ENCODE measurements at regions of chr2 and their contacts with region 1.

Region 1: DNA sequence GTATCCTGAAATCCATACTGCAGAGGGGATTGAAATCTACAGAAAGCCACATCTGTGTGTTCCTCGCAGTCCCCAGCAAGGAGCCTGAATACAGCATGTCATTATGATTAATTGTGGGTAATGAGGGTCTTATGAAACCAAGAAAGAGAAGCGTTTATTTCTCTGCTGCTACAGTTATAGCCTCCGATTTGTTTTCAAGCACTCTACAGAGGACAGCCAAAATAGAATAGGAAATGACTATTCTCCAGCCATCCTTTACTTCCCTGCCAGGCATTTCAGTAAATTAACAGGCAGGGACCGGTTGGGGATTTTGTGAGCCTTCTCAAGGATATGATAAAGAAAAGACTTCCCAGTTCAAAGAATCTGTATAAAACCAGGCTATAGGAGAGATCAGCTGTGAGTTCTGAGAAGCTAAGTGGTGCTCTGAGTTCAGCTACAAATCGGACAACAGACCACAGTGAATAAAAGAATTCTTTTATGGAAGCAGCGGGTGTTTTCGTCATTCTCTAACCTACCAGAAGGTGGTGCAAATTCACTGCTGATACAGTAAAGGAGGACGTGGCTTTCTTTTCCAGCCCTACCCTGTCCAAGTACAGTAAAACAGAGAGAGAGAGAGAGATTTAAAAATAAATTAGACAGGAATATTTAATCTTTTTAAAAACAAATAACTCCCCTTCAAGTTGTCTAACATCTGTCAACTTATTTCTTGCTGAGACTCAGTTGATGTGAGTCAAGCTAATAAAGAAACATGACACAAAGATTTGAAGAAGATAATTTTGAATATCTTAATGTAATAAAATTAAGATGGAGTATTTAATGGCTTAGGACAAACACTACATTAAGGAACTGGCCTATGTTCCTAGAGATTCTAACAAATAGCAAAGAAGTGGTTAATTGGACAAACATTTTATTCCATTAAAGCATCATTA is 133.7 kb downstream of the INSIG2 start:
- DNase-seq: peak; percentile 52 to 61 (median 54)
- H3K4me3 ChIP-seq: no peak overlapping the region
- H3K4me3 Mint-ChIP-seq: peak overlapping the region in 2 of 8 donors; percentile 1 to 11
- H3K27ac ChIP-seq: no peak overlapping the region
- H3K27ac Mint-ChIP-seq: no peak overlapping the region
- H3K4me1 ChIP-seq: peaks cover 16% of the 10 kb centered on the region
- H3K4me1 Mint-ChIP-seq: peaks cover 5 to 21% (median 10%) of the 10 kb centered on the region in 4 donors
- H3K27me3 ChIP-seq: peaks cover 48% of the 10 kb centered on the region
- H3K27me3 Mint-ChIP-seq: peaks cover 44 to 58% of the 10 kb centered on the region in 2 donors

Region 2: GRCh38 chr2:118046634-118047210 is 175.2 kb before region 1 on chr2:
- CTCF ChIA-PET with region 1: interaction called, 17 read pairs
- POLR2A ChIA-PET with region 1: no interaction called
- intact Hi-C with region 1: loop called (anchors 1 kb)
- DNase-seq: peak in 4 of 5 donors; percentile 24 to 34 (median 26)
- H3K4me3 ChIP-seq: no peak overlapping the region
- H3K4me3 Mint-ChIP-seq: no peak overlapping the region
- H3K27ac ChIP-seq: no peak overlapping the region
- H3K27ac Mint-ChIP-seq: no peak overlapping the region
- H3K4me1 ChIP-seq: no peaks in the 10 kb centered on the region
- H3K4me1 Mint-ChIP-seq: no peaks in the 10 kb centered on the region
- H3K27me3 ChIP-seq: no peaks in the 10 kb centered on the region
- H3K27me3 Mint-ChIP-seq: peaks cover 24 to 45% of the 10 kb centered on the region in 2 donors

Region 3: GRCh38 chr2:118145806-118146205 is 76.1 kb before region 1 on chr2:
- CTCF ChIA-PET with region 1: no interaction called
- POLR2A ChIA-PET with region 1: no interaction called
- intact Hi-C with region 1: no loop called
- DNase-seq: no peak
- H3K4me3 ChIP-seq: no peak overlapping the region
- H3K4me3 Mint-ChIP-seq: no peak overlapping the region
- H3K27ac ChIP-seq: no peak overlapping the region
- H3K27ac Mint-ChIP-seq: no peak overlapping the region
- H3K4me1 ChIP-seq: no peaks in the 10 kb centered on the region
- H3K4me1 Mint-ChIP-seq: peaks cover 0 to 11% (median 2%) of the 10 kb centered on the region in 4 donors
- H3K27me3 ChIP-seq: no peaks in the 10 kb centered on the region
- H3K27me3 Mint-ChIP-seq: peaks cover 14 to 17% of the 10 kb centered on the region in 2 donors

Region 4: GRCh38 chr2:118309946-118310680 is 88.2 kb after region 1 on chr2:
- CTCF ChIA-PET with region 1: interaction called, 3 read pairs
- POLR2A ChIA-PET with region 1: no interaction called
- intact Hi-C with region 1: loop called (anchors 5 kb)
- DNase-seq: peak; percentile 74 to 80 (median 77)
- H3K4me3 ChIP-seq: peak overlapping the region; percentile 63 to 81
- H3K4me3 Mint-ChIP-seq: peak overlapping the region; percentile 86 to 95 (median 92)
- H3K27ac ChIP-seq: peak overlapping the region; percentile 66
- H3K27ac Mint-ChIP-seq: peak overlapping the region; percentile 90 to 99 (median 97)
- H3K4me1 ChIP-seq: peaks cover 10% of the 10 kb centered on the region
- H3K4me1 Mint-ChIP-seq: peaks cover 1 to 13% (median 7%) of the 10 kb centered on the region in 4 donors
- H3K27me3 ChIP-seq: no peaks in the 10 kb centered on the region
- H3K27me3 Mint-ChIP-seq: peaks cover 0 to 2% of the 10 kb centered on the region in 2 donors

Region 5: GRCh38 chr2:118709786-118710185 is 487.9 kb after region 1 on chr2:
- CTCF ChIA-PET with region 1: no interaction called
- POLR2A ChIA-PET with region 1: no interaction called
- intact Hi-C with region 1: no loop called
- DNase-seq: no peak
- H3K4me3 ChIP-seq: no peak overlapping the region
- H3K4me3 Mint-ChIP-seq: no peak overlapping the region
- H3K27ac ChIP-seq: no peak overlapping the region
- H3K27ac Mint-ChIP-seq: no peak overlapping the region
- H3K4me1 ChIP-seq: no peaks in the 10 kb centered on the region
- H3K4me1 Mint-ChIP-seq: no peaks in the 10 kb centered on the region
- H3K27me3 ChIP-seq: no peaks in the 10 kb centered on the region
- H3K27me3 Mint-ChIP-seq: peaks cover 4 to 7% of the 10 kb centered on the region in 2 donors

Region 6: DNA sequence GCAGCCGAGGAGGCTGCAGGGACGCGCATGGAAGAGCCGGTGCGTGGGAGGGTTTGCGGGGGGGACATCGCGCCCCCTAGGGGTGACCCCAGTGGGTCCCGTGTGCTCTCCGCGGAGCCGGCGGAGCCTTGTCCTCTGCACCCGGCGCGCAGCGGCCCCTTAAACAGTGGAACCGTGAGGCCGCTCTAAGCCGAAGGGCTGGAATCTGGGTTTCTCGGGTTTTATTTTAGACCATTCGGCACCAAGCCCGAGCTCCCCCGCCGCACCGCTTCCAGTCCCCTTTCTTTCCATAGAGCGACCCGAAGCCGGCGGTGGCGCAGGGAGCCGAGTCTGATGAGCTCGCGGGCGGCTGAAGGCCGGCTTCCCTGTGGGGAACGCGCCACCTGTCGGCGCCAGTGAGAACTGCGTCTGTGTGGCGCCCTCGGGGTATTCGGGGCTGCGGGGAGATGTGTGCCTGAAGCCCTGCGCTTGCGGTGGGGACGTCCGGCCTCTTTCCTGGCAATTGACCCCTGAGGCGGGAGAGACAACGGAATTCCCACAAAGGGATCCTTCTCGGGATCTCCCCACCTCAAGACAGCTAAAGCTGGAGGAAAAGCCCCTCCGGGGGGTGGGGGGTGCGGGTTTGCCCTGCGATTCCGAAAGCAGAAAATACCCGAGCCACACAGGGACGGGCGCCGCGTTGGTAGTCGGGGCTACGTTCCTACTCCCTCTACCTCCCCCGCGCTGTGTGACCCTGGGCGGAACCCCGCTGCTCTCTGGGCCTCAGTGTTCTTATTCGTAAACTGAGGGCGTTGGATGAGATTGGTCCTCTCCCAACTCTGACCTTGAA is 633.7 kb after region 1 on chr2:
- CTCF ChIA-PET with region 1: interaction called, 67 read pairs
- POLR2A ChIA-PET with region 1: interaction called, 5 read pairs
- intact Hi-C with region 1: loop called (anchors 1 kb)
- DNase-seq: peak; percentile 60 to 84 (median 77)
- H3K4me3 ChIP-seq: no peak overlapping the region
- H3K4me3 Mint-ChIP-seq: peak overlapping the region; percentile 58 to 80 (median 64)
- H3K27ac ChIP-seq: no peak overlapping the region
- H3K27ac Mint-ChIP-seq: peak overlapping the region in 1 of 7 donors; percentile 68
- H3K4me1 ChIP-seq: peaks cover 19% of the 10 kb centered on the region
- H3K4me1 Mint-ChIP-seq: peaks cover 17 to 33% (median 21%) of the 10 kb centered on the region in 4 donors
- H3K27me3 ChIP-seq: peaks cover 65% of the 10 kb centered on the region
- H3K27me3 Mint-ChIP-seq: peaks cover 60 to 64% of the 10 kb centered on the region in 2 donors

Region 7: DNA sequence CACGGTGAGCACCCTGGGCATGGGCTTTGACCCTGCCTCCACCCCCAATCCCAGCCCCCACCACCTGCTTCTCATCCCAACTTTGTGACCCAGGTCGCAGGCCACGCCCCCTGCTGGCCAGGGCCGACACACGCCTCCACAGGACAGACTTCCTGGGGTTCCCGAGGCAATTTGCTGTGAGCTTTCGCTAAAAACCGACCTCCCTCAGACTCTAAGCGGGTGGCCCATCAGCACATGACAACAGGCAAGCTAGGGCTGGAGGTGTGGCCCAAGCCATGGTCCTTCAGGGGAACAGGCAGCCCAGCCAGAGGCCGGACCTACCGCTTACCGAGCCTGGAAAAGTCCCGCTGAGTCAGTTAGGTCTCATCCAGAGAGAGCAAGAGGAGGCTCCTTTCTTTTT is 904.7 kb after region 1 on chr2:
- CTCF ChIA-PET with region 1: no interaction called
- POLR2A ChIA-PET with region 1: no interaction called
- intact Hi-C with region 1: loop called (anchors 5 kb)
- DNase-seq: peak in 2 of 5 donors; percentile 6 to 7
- H3K4me3 ChIP-seq: no peak overlapping the region
- H3K4me3 Mint-ChIP-seq: no peak overlapping the region
- H3K27ac ChIP-seq: no peak overlapping the region
- H3K27ac Mint-ChIP-seq: no peak overlapping the region
- H3K4me1 ChIP-seq: no peaks in the 10 kb centered on the region
- H3K4me1 Mint-ChIP-seq: no peaks in the 10 kb centered on the region
- H3K27me3 ChIP-seq: no peaks in the 10 kb centered on the region
- H3K27me3 Mint-ChIP-seq: peaks cover 5 to 6% of the 10 kb centered on the region in 2 donors

Measured in CD4-positive, alpha-beta memory T cell (primary cell).